ENCODE measurements at regions of chr12 and their contacts with region 1.

Region 1: DNA sequence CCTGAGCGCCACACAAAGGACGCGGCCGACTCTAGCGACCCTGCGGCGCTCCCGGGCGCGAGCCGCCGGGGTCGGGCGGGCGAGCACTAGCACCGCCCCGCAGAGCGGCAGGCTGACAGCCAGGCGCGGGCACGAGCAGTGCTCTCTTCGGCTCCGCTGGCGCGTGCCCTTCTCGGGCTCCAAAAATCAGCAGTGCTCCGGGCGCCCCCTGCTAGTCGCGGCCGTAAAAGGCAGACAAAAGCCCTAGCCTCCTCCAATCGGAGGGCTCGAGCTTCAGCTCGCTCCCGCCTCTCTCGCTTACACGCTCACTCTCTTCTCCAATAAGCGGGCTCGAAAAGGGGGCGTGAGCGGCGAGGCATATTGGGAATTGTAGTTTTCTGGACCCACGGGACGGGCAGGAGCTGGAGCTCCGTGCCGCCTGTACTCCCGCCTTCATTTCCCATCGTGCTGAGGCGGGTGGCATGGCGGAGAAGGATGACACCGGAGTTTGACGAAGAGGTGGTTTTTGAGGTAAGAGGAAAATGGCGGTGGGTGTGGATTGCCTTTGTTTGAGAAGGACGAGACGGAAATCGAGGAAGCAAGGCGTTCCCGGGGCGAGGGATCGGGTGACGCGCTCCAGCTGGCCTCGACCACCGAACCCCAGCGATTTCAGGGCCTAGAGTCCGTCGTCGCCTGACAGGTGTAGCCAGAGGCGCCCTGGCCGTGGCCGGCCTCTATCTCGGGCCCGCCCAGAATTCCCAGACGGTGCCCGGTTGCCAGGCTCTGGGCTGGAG is at the starts of genes FGD6 and VEZT:
- DNase-seq: peak; percentile 99
- H3K4me3 Mint-ChIP-seq: peak within 1 kb of the TSS; percentile 89
- H3K27ac Mint-ChIP-seq: peak within 1 kb of the TSS; percentile 95
- H3K4me1 Mint-ChIP-seq: peaks cover 24% of the 10 kb centered on the region
- H3K27me3 Mint-ChIP-seq: peaks cover 15% of the 10 kb centered on the region
- total RNA-seq, gene FGD6: 0.45 and 0.70 TPM in 2 replicates
- total RNA-seq, gene VEZT: 57.7 and 58.8 TPM in 2 replicates

Region 2: GRCh38 chr12:95003213-95003920 is 214.2 kb before region 1 on chr12 and contains the start of gene NDUFA12:
- intact Hi-C with region 1: loop called (anchors 2 kb)
- DNase-seq: peak; percentile 99
- H3K4me3 Mint-ChIP-seq: peak within 1 kb of the TSS; percentile 95
- H3K27ac Mint-ChIP-seq: peak within 1 kb of the TSS; percentile 92
- H3K4me1 Mint-ChIP-seq: peaks cover 31% of the 10 kb centered on the region
- H3K27me3 Mint-ChIP-seq: peaks cover 1% of the 10 kb centered on the region
- total RNA-seq, gene NDUFA12: 111 and 116 TPM in 2 replicates

Region 3: GRCh38 chr12:95102916-95103671 is 114.5 kb before region 1 on chr12:
- intact Hi-C with region 1: loop called (anchors 1 kb)
- DNase-seq: peak; percentile 80
- H3K4me3 Mint-ChIP-seq: peak overlapping the region; percentile 44
- H3K27ac Mint-ChIP-seq: peak overlapping the region; percentile 64
- H3K4me1 Mint-ChIP-seq: peaks cover 11% of the 10 kb centered on the region
- H3K27me3 Mint-ChIP-seq: no peaks in the 10 kb centered on the region

Region 4: GRCh38 chr12:95240556-95240955 is 23.0 kb after region 1 on chr12:
- intact Hi-C with region 1: loop called (anchors 1 kb)
- DNase-seq: no peak
- H3K4me3 Mint-ChIP-seq: no peak overlapping the region
- H3K27ac Mint-ChIP-seq: peak overlapping the region; percentile 34
- H3K4me1 Mint-ChIP-seq: peaks cover 11% of the 10 kb centered on the region
- H3K27me3 Mint-ChIP-seq: no peaks in the 10 kb centered on the region

Region 5: GRCh38 chr12:95303476-95303875 is 85.9 kb after region 1 on chr12:
- intact Hi-C with region 1: no loop called
- DNase-seq: no peak
- H3K4me3 Mint-ChIP-seq: no peak overlapping the region
- H3K27ac Mint-ChIP-seq: no peak overlapping the region
- H3K4me1 Mint-ChIP-seq: no peaks in the 10 kb centered on the region
- H3K27me3 Mint-ChIP-seq: no peaks in the 10 kb centered on the region

Region 6: DNA sequence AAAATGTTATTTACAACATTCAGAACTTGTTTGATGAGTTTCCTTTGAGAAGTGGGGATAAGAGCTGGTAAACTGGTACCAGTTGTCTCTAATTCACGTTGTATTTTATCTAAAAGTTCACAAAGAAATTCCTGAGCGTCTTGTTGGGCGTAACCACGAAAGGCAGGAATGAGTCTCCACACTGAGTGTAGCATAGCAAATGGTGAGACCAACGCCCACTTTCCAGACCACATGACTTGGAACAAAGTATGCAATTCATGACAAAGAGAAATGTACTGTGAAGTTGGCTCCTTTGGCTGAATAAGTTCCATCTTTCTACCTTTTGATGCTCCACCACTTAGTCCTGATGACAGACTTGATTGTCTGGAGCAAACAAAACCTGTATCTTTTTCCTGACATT is 315.3 kb after region 1 on chr12:
- intact Hi-C with region 1: loop called (anchors 5 kb)
- DNase-seq: no peak
- H3K4me3 Mint-ChIP-seq: no peak overlapping the region
- H3K27ac Mint-ChIP-seq: no peak overlapping the region
- H3K4me1 Mint-ChIP-seq: peaks cover 10% of the 10 kb centered on the region
- H3K27me3 Mint-ChIP-seq: no peaks in the 10 kb centered on the region

Region 7: GRCh38 chr12:95858479-95859343 is 641.1 kb after region 1 on chr12 and contains the start of gene SNRPF:
- intact Hi-C with region 1: loop called (anchors 2 kb)
- DNase-seq: peak; percentile 98
- H3K4me3 Mint-ChIP-seq: peak within 1 kb of the TSS; percentile 41
- H3K27ac Mint-ChIP-seq: no peak within 1 kb of the TSS
- H3K4me1 Mint-ChIP-seq: peaks cover 17% of the 10 kb centered on the region
- H3K27me3 Mint-ChIP-seq: peaks cover 11% of the 10 kb centered on the region
- total RNA-seq, gene SNRPF: 64.3 and 68.8 TPM in 2 replicates

Region 8: GRCh38 chr12:96194971-96195844 is 977.6 kb after region 1 on chr12:
- intact Hi-C with region 1: loop called (anchors 5 kb)
- DNase-seq: peak; percentile 91
- H3K4me3 Mint-ChIP-seq: peak overlapping the region; percentile 94
- H3K27ac Mint-ChIP-seq: peak overlapping the region; percentile 97
- H3K4me1 Mint-ChIP-seq: peaks cover 41% of the 10 kb centered on the region
- H3K27me3 Mint-ChIP-seq: no peaks in the 10 kb centered on the region